ENCODE measurements at regions of chr1 and their contacts with region 1.

Region 1: DNA sequence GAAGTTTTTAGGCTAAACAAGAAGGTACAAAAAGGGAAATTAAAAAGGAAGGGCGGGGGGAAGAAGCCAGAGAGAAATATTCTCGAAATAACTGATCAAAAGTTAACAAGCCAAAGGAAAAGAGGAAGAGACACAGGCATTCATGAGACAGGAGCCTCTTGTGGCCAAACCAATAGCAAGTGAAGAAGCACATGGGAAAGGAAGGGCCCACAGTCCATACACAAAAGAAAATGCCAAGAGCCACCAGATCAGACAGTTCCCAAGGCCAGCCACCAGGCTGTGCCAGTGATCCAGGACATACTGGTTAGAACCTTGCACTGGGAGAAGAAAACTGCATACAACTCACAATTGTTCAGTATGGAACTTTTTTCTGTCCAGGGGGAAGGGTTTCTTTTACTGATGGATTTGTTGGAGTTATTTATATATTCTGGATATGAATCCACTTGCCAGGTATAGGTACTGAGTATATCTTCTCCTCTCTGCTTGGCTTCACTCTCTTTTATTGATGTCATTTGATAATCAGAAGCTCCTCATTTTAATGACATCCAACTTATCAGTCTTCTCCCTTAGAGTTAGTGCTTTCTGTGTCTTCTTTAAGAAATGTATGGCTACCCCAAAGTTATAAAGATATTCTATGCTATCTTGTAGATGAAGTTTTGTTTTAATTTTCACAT is 76.8 kb downstream of the CD46 start:
- DNase-seq: peak; percentile 75 to 95 (median 85)
- H3K4me3 ChIP-seq: no peak overlapping the region
- H3K27ac ChIP-seq: peak overlapping the region; percentile 34 to 99 (median 54)
- H3K4me1 ChIP-seq: peaks cover 63 to 91% of the 10 kb centered on the region in 2 donors
- H3K27me3 ChIP-seq: no peaks in the 10 kb centered on the region
- CTCF ChIP-seq: peak; percentile 67 to 99 (median 96)
- POLR2A ChIP-seq: no peak

Region 2: DNA sequence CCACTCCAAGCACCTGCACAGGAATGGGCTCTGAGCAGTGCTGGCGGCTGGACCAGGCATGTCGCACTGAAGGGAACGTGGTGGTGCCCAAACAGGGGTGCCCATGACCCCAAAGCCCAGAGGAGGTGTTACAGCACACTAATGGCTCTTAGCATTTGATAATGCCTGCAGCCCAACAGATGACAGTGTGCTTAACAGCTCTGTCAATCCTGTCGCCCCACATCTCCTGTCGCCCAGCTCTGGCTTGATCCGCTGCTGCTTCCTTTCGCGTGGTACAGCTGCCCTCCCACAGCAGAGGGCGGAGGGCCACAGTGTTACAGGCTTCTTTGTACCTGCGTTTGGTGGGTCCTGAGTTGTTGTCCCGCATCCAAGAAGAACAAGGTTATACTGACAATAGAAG is 215.9 kb before region 1 on chr1:
- intact Hi-C with region 1: no loop called
- DNase-seq: no peak
- H3K4me3 ChIP-seq: no peak overlapping the region
- H3K27ac ChIP-seq: no peak overlapping the region
- H3K4me1 ChIP-seq: no peaks in the 10 kb centered on the region
- H3K27me3 ChIP-seq: no peaks in the 10 kb centered on the region
- CTCF ChIP-seq: no peak
- POLR2A ChIP-seq: no peak

Region 3: GRCh38 chr1:207863893-207864535 is 35.4 kb after region 1 on chr1:
- intact Hi-C with region 1: loop called (anchors 2 kb)
- DNase-seq: peak in 2 of 7 donors; percentile 30 to 58
- H3K4me3 ChIP-seq: no peak overlapping the region
- H3K27ac ChIP-seq: peak overlapping the region in 3 of 5 donors; percentile 28 to 45 (median 41)
- H3K4me1 ChIP-seq: peaks cover 29 to 71% of the 10 kb centered on the region in 2 donors
- H3K27me3 ChIP-seq: no peaks in the 10 kb centered on the region
- CTCF ChIP-seq: no peak
- POLR2A ChIP-seq: no peak

Region 4: DNA sequence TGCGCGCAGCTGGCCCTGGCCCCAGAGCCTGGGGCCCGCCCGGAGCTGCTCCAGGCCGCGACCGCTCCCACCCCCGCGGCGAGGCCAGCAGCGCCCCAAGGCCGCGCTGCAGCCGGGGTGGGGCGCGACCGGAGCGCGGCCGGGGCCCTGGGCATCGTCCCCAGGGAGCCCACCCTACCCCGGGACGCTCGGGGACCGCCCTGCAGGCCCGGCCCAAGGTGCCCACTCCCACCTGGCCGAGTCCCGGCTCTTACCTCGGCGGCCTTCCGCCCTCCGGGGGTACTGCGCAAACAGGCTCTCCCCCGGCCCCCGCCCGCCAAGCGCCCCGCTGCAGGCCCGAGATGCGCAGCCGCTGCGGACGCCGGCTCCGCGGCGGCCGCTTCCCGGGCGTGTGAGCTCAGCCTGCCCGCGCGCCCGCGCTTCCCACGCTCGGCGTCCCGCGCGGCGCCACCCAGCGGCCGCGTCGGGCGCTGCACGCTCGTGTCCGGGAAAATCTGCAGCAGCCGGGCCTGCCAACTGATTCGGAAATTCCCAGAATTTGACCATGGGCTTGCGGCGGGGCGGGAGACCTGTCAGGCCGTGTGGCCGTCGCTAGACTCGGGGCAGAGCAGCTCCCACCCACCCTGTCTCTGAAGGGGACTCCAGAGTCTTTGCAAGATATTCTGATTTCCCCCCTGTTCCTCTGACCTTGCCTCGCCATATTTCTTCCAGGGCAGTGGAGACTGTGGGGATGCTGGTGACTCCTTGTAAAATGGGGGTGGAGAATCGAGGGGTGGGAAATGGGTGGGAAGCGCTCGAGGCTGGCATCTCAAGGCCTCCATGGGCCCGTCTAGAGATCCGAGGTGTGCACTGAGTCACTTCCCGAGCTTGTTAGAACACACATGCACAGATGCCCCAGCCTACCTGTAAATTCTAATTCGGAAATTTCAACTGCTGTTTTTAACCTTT is 40.4 kb after region 1 on chr1:
- intact Hi-C with region 1: loop called (anchors 2 kb)
- DNase-seq: peak; percentile 79 to 90 (median 85)
- H3K4me3 ChIP-seq: peak overlapping the region; percentile 28 to 94 (median 70)
- H3K27ac ChIP-seq: peak overlapping the region; percentile 37 to 97 (median 95)
- H3K4me1 ChIP-seq: peaks cover 52 to 68% of the 10 kb centered on the region in 2 donors
- H3K27me3 ChIP-seq: no peaks in the 10 kb centered on the region
- CTCF ChIP-seq: peak; percentile 28 to 99 (median 72)
- POLR2A ChIP-seq: peak; percentile 69 to 88

Region 5: DNA sequence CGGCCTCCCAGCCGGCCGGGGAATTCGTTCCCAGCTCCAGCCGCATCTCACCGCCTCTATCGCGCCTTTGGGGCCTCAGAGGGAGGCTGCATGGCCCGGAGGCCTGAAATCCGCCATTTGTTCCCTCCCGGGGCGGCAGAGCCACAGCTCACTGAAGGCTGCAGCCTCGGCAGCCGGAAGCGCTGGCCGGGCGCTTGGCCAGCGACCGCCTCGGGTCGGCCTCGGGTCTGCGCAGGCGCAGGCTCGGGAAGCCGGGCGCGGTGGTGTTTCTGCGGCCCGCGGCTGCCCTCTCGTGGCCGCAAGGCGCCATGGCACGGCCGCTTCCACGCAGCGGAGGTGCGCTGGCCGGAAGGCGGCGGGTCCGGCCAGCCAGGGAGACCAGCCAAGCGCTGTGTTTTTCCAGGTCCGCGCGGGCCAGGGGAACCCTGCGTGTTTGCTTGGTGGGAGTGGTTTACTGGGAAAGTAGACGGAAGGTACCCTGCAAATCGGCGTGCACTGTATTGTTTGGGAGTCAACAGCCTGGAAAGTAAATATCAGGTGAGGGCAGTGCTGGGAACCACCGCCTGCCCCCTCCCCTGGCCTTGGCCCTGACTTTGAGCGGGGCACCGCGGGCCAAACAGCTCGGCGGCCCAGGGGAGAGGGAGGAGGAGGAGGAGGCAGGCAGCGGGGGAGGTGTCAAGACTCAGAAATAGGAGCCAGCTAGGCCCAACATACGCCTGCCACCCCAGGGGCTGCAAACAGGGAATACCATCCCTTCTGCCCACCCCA is 135.0 kb after region 1 on chr1:
- intact Hi-C with region 1: loop called in 1 of 2 experiments (anchors 10 kb)
- DNase-seq: peak; percentile 90 to 96 (median 94)
- H3K4me3 ChIP-seq: peak overlapping the region in 2 of 4 donors; percentile 25 to 48
- H3K27ac ChIP-seq: peak overlapping the region; percentile 55 to 92 (median 89)
- H3K4me1 ChIP-seq: peaks cover 15 to 53% of the 10 kb centered on the region in 2 donors
- H3K27me3 ChIP-seq: no peaks in the 10 kb centered on the region
- CTCF ChIP-seq: peak; percentile 67 to 100 (median 97)
- POLR2A ChIP-seq: peak; percentile 88 to 91

Region 6: GRCh38 chr1:208007938-208008342 is 179.3 kb after region 1 on chr1:
- intact Hi-C with region 1: no loop called
- DNase-seq: peak in 3 of 7 donors; percentile 26 to 43 (median 35)
- H3K4me3 ChIP-seq: no peak overlapping the region
- H3K27ac ChIP-seq: peak overlapping the region in 2 of 5 donors; percentile 58 to 60
- H3K4me1 ChIP-seq: peaks cover 0 to 10% of the 10 kb centered on the region in 2 donors
- H3K27me3 ChIP-seq: no peaks in the 10 kb centered on the region
- CTCF ChIP-seq: no peak
- POLR2A ChIP-seq: no peak